ENCODE measurements at regions of chr12 and their contacts with region 1.

Region 1: GRCh38 chr12:108565976-108566375 is 3.6 kb downstream of the ISCU start:
- DNase-seq: peak in 1 of 5 donors; percentile 95
- H3K4me3 ChIP-seq: no peak overlapping the region
- H3K27ac ChIP-seq: peak overlapping the region; percentile 35 to 68
- H3K4me1 ChIP-seq: peaks cover 0 to 30% (median 29%) of the 10 kb centered on the region in 3 donors
- H3K27me3 ChIP-seq: no peaks in the 10 kb centered on the region
- CTCF ChIP-seq: no peak

Region 2: GRCh38 chr12:108618079-108618952 is 52.3 kb after region 1 on chr12:
- intact Hi-C with region 1: loop called (anchors 5 kb)
- DNase-seq: peak; percentile 86 to 93 (median 88)
- H3K4me3 ChIP-seq: no peak overlapping the region
- H3K27ac ChIP-seq: no peak overlapping the region
- H3K4me1 ChIP-seq: peaks cover 0 to 8% (median 0%) of the 10 kb centered on the region in 3 donors
- H3K27me3 ChIP-seq: no peaks in the 10 kb centered on the region
- CTCF ChIP-seq: peak; percentile 90

Region 3: DNA sequence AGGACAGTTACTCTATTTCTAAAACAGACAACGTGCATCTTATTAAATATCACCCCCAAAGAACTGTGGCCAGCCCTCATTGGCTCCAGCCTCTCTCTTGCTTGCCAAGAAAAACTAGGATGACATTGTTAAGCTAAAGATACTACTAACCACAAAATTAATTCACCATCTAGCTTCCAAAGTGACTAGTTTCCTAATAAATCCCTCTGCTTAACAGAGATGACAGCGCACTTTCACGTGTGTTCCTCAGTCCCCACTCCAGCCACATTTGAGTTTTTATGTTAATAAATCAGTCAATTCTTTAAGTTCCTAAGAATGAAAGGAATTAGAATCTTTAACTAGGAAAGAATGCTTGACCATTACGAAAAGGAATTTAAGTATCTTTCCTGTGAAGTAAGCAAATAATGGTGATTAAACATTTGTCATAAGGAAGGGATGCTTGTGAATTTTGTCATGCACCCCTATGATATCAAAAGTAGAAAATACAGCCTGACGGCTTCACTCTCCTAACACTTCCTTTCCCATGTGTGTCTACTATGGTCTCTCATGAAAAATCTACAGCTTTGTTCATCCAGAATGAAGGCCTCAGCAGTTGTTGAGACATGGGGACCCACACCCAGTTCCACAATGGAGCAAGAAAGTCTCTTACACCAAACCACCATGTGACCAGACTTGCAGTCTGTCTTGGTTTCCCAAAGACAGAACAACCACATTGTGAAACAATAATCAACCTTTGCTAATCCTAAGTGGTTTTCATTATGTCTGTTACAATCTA is 157.2 kb after region 1 on chr12:
- intact Hi-C with region 1: no loop called
- DNase-seq: peak in 1 of 5 donors; percentile 33
- H3K4me3 ChIP-seq: no peak overlapping the region
- H3K27ac ChIP-seq: peak overlapping the region in 1 of 2 donors; percentile 13
- H3K4me1 ChIP-seq: peaks cover 0 to 2% (median 2%) of the 10 kb centered on the region in 3 donors
- H3K27me3 ChIP-seq: no peaks in the 10 kb centered on the region
- CTCF ChIP-seq: no peak

Measured in kidney (tissue), 22 donors.